ENCODE measurements at regions of chr12 and their contacts with region 1.

Region 1: GRCh38 chr12:78002878-78003277 is 172.2 kb downstream of the NAV3 start:
- DNase-seq: no peak

Region 2: DNA sequence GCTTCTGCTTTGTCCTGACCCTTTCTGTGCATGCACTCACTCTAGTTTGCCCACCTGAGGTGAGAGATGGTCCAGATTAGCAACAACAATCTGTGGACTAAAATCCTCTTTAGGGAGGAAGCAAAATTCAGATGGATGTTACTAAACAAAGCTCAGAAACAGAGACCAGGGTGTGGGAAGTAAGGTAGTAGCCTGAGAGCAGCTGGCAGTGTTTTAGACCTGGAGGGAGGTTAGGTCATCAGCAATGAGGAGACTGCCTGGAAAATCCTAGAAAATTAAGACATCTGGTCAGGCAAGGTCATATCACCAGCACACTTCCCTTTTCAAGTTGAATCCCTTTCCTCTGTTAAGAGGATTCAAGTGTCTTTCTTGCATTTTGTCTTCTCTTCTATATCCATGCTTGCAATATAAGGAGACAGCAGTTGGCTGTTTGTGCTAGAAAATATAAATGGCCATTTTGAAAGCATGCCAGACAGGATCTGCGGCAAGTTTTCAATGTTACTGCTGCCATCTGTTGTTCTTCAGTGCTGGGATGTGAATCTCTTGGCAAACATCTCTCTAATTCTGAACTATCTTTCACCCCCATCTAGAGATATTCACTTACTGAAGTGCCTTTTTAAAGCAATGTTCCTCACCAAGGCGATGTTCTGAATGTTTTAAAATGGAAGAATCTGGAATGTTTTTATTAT is 94.2 kb after region 1 on chr12:
- intact Hi-C with region 1: loop called (anchors 5 kb)
- DNase-seq: peak in 2 of 10 donors; percentile 44 to 52

Region 3: GRCh38 chr12:78120866-78121560 is 118.1 kb after region 1 on chr12:
- intact Hi-C with region 1: loop called (anchors 1 kb)
- DNase-seq: no peak